ENCODE measurements at regions of chr3 and their contacts with region 1.

Region 1: DNA sequence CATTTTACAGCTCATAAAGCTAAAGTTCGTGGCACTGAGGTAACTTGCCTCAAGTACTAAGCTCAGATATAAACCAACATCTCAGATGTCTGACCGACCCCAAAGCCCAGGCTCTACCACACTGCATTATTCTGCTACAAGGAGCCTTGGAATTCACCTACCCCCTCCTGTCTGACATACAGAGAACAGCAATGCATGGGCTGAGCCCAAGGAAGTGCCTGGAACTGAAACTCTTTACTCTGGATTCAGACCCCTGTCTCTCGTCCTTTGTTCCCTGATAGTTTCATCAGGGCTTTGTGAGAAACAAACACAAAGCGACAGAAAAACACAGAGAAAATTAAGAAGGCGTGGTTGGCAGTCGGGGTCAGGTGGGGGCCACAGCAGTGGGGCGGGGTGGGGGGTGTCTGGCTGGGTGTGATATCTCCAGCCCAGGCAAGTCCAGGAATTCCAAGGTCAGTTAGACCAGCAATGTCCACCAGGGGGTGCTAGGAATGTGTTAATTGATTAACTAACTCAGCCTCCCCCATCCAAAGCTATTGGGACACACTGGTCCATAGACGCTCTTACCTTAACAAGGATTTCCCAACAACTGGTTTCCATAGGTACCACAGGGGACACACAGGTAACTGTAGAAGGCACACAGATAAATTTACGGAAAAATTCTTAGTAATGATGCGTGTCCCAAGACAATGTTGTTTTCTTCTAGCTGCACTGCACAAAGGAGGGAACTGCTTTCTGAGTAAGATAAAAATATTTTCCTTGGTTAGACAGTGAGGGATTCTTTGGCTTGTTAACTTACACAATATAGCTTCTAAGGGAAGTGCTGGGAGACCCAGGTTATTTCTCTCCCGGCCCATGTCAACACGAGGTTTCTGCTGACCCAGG is 18.8 kb upstream of the SSUH2 start:
- DNase-seq: peak; percentile 81
- H3K4me3 Mint-ChIP-seq: no peak overlapping the region
- H3K27ac Mint-ChIP-seq: no peak overlapping the region
- H3K4me1 Mint-ChIP-seq: peaks cover 29% of the 10 kb centered on the region
- H3K27me3 Mint-ChIP-seq: peaks cover 10% of the 10 kb centered on the region
- CTCF ChIP-seq: peak; percentile 68

Region 2: DNA sequence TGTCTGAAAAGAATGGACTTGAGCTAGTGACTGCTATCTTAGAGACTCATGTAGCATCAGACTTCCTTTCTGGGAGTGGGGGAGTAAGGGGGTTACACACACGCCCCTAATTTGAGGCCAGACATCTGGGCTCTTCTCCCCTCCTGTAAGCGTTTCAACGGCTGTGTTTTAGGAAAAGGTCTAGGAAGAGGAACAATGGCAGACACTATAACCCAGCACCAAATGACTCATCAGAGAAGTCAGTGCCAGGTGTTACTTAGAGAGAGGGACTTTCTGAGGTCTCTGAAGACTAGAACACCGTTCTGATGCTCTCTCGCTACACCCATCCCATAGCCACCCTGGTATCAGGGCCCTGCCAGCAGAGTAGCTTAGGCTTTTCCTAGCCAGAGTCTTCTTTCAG is 84.3 kb before region 1 on chr3:
- CTCF ChIA-PET with region 1: no interaction called
- POLR2A ChIA-PET with region 1: no interaction called
- intact Hi-C with region 1: no loop called
- DNase-seq: peak; percentile 25
- H3K4me3 Mint-ChIP-seq: no peak overlapping the region
- H3K27ac Mint-ChIP-seq: peak overlapping the region; percentile 17
- H3K4me1 Mint-ChIP-seq: peaks cover 13% of the 10 kb centered on the region
- H3K27me3 Mint-ChIP-seq: no peaks in the 10 kb centered on the region
- CTCF ChIP-seq: no peak

Region 3: GRCh38 chr3:8755563-8756237 is 92.3 kb after region 1 on chr3:
- CTCF ChIA-PET with region 1: interaction called, 13 read pairs
- POLR2A ChIA-PET with region 1: no interaction called
- intact Hi-C with region 1: no loop called
- DNase-seq: peak; percentile 20
- H3K4me3 Mint-ChIP-seq: no peak overlapping the region
- H3K27ac Mint-ChIP-seq: no peak overlapping the region
- H3K4me1 Mint-ChIP-seq: peaks cover 13% of the 10 kb centered on the region
- H3K27me3 Mint-ChIP-seq: no peaks in the 10 kb centered on the region
- CTCF ChIP-seq: no peak

Region 4: DNA sequence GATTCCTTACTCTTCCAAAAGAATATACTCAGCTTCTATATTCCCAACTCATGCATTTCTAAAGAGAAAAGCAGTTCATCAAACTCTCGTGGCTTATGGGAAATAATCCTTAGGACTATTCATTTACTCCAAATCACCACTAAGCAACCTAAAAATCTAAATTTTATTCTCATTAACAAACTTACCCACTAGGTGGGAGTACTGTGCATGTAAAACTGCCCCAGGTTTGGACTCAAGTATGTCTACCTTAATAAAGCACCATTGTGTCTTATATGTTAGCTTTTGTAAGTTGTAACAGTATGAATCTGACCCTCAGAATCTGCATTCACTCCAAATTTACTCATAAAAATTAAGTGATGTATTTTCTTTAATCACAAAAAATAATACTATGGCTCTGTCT is 274.6 kb after region 1 on chr3:
- CTCF ChIA-PET with region 1: interaction called, 4 read pairs
- POLR2A ChIA-PET with region 1: interaction called, 3 read pairs
- intact Hi-C with region 1: loop called (anchors 5 kb)
- DNase-seq: peak; percentile 49
- H3K4me3 Mint-ChIP-seq: no peak overlapping the region
- H3K27ac Mint-ChIP-seq: peak overlapping the region; percentile 84
- H3K4me1 Mint-ChIP-seq: peaks cover 27% of the 10 kb centered on the region
- H3K27me3 Mint-ChIP-seq: no peaks in the 10 kb centered on the region
- CTCF ChIP-seq: peak; percentile 35

Region 5: GRCh38 chr3:9067352-9067975 is 404.0 kb after region 1 on chr3:
- CTCF ChIA-PET with region 1: interaction called, 5 read pairs
- POLR2A ChIA-PET with region 1: interaction called, 3 read pairs
- intact Hi-C with region 1: loop called (anchors 5 kb)
- DNase-seq: peak; percentile 55
- H3K4me3 Mint-ChIP-seq: no peak overlapping the region
- H3K27ac Mint-ChIP-seq: no peak overlapping the region
- H3K4me1 Mint-ChIP-seq: no peaks in the 10 kb centered on the region
- H3K27me3 Mint-ChIP-seq: no peaks in the 10 kb centered on the region
- CTCF ChIP-seq: peak; percentile 89